ENCODE measurements at regions of chr13 and their contacts with region 1.

Region 1: GRCh38 chr13:41132512-41133152 is at the start of gene KBTBD6:
- DNase-seq: peak; percentile 97
- H3K4me3 ChIP-seq: peak within 1 kb of the TSS; percentile 66 to 87 (median 83)
- H3K27ac ChIP-seq: peak within 1 kb of the TSS; percentile 83 to 94 (median 88)
- H3K4me1 ChIP-seq: peaks cover 24 to 55% (median 48%) of the 10 kb centered on the region in 4 donors
- H3K27me3 ChIP-seq: no peaks in the 10 kb centered on the region
- CTCF ChIP-seq: no peak
- EP300 ChIP-seq: no peak
- POLR2A ChIP-seq: peak; percentile 14
- total RNA-seq, gene KBTBD6: 4.6 to 9.1 (median 7.5) TPM

Region 2: DNA sequence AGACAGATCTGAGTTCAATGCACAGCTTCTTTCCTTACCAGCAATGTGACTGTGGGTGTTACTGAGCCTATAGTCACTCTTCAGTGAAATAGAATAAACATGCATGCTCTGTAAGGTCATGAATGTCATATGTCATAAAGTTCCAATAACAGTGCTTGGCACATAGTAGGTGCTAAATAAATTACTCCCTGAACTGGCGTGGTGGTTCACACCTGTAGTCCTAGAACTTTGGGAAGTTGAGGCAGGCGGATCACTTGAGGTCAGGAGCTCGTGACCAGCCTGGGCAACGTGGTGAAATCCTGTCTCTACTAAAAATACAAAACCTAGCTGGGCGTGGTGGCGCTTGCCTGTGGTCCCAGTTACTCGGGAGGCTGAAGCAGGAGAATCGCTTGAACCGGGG is 58.1 kb before region 1 on chr13:
- intact Hi-C with region 1: loop called (anchors 5 kb)
- DNase-seq: no peak
- H3K4me3 ChIP-seq: no peak overlapping the region
- H3K27ac ChIP-seq: no peak overlapping the region
- H3K4me1 ChIP-seq: no peaks in the 10 kb centered on the region
- H3K27me3 ChIP-seq: no peaks in the 10 kb centered on the region
- CTCF ChIP-seq: no peak
- EP300 ChIP-seq: no peak
- POLR2A ChIP-seq: no peak

Region 3: GRCh38 chr13:41193919-41194824 is 61.5 kb after region 1 on chr13 and contains the start of gene KBTBD7:
- intact Hi-C with region 1: loop called (anchors 2 kb)
- DNase-seq: peak; percentile 97
- H3K4me3 ChIP-seq: peak within 1 kb of the TSS; percentile 67 to 85 (median 76)
- H3K27ac ChIP-seq: peak within 1 kb of the TSS; percentile 88 to 91 (median 90)
- H3K4me1 ChIP-seq: peaks cover 18 to 28% (median 22%) of the 10 kb centered on the region in 4 donors
- H3K27me3 ChIP-seq: no peaks in the 10 kb centered on the region
- CTCF ChIP-seq: peak; percentile 5 to 17 (median 7)
- EP300 ChIP-seq: no peak
- POLR2A ChIP-seq: no peak
- total RNA-seq, gene KBTBD7: 4.0 to 10.3 (median 7.7) TPM

Measured in esophagus muscularis mucosa (tissue), 4 donors.